Caco-2 (cell line): ENCODE measurements at regions of chr2 and their contacts with region 1.

Region 1: DNA sequence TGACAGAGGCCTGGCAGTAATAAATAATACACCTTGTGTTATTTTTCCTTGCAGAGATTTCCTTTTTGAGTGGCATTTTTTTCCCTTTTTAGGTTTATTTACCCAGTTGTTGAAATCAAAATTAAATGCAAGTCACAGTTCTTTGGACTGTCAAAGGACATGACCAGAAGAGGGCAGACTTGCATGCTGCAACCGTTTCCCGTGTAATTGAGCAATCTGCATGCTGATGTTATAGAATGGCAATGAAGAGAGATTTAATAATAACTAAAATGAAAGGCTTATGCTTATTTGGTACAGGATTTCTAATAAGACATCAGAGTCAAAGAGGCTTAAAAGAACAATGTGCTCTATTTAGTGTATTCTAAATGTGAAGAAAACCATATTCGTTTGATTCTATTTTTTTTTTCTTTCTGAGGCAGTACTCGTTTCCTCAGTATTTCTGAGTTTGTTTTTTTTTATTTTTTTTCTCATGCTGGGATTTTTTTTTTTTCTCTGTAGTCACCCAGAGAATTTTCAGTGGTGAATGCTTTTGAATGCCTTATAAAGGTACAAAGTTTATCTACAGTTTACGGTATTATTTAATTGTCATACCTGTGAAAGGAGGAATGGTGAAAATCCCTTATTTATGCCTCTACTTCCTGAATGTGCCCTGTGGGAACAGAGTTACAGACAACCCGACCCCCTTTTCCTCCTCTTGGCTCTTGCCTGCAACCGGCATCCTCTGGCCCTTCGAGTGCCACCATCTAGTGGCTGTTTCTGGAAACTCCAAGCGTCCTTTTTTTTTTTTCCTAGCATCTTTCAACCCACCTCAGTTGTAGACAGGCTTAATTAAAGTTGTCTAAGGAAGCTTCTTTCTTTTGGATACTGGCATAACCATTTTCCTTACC is 368.5 kb downstream of the LRRTM1 start:
- DNase-seq: peak; percentile 50 to 70
- H3K4me3 ChIP-seq: no peak overlapping the region
- H3K4me3 Mint-ChIP-seq: peak overlapping the region; percentile 8
- H3K27ac Mint-ChIP-seq: no peak overlapping the region
- H3K4me1 ChIP-seq: no peaks in the 10 kb centered on the region
- H3K4me1 Mint-ChIP-seq: no peaks in the 10 kb centered on the region
- H3K27me3 ChIP-seq: no peaks in the 10 kb centered on the region
- H3K27me3 Mint-ChIP-seq: peaks cover 11% of the 10 kb centered on the region
- CTCF ChIP-seq: peak; percentile 56 to 84

Region 2: GRCh38 chr2:79982445-79982844 is 46.4 kb after region 1 on chr2:
- CTCF ChIA-PET with region 1: no interaction called
- POLR2A ChIA-PET with region 1: no interaction called
- intact Hi-C with region 1: loop called (anchors 1 kb)
- DNase-seq: peak; percentile 45 to 60
- H3K4me3 ChIP-seq: no peak overlapping the region
- H3K4me3 Mint-ChIP-seq: no peak overlapping the region
- H3K27ac Mint-ChIP-seq: no peak overlapping the region
- H3K4me1 ChIP-seq: no peaks in the 10 kb centered on the region
- H3K4me1 Mint-ChIP-seq: no peaks in the 10 kb centered on the region
- H3K27me3 ChIP-seq: no peaks in the 10 kb centered on the region
- H3K27me3 Mint-ChIP-seq: no peaks in the 10 kb centered on the region
- CTCF ChIP-seq: peak; percentile 47 to 61

Region 3: GRCh38 chr2:80519699-80520291 is 583.8 kb after region 1 on chr2:
- CTCF ChIA-PET with region 1: no interaction called
- POLR2A ChIA-PET with region 1: no interaction called
- intact Hi-C with region 1: no loop called
- DNase-seq: no peak
- H3K4me3 ChIP-seq: no peak overlapping the region
- H3K4me3 Mint-ChIP-seq: no peak overlapping the region
- H3K27ac Mint-ChIP-seq: no peak overlapping the region
- H3K4me1 ChIP-seq: no peaks in the 10 kb centered on the region
- H3K4me1 Mint-ChIP-seq: no peaks in the 10 kb centered on the region
- H3K27me3 ChIP-seq: no peaks in the 10 kb centered on the region
- H3K27me3 Mint-ChIP-seq: peaks cover 8% of the 10 kb centered on the region
- CTCF ChIP-seq: no peak